Activated CD4-positive, alpha-beta memory T cell treated with anti-CD3 and anti-CD28 coated beads, Interleukin-2, amount 10 ng/mL, durations not matched to agents 7 days and 5 days (primary cell): ENCODE measurements at regions of chr4 and their contacts with region 1.

Region 1: GRCh38 chr4:163554870-163555465 is 60.5 kb downstream of the TMA16 start:
- DNase-seq: no peak
- H3K4me3 Mint-ChIP-seq: no peak overlapping the region
- H3K27ac Mint-ChIP-seq: no peak overlapping the region
- H3K4me1 Mint-ChIP-seq: peaks cover 26% of the 10 kb centered on the region
- H3K27me3 Mint-ChIP-seq: peaks cover 1% of the 10 kb centered on the region

Region 2: GRCh38 chr4:162497564-162498167 is 1057.3 kb before region 1 on chr4:
- CTCF ChIA-PET with region 1: interaction called, 11 read pairs
- POLR2A ChIA-PET with region 1: no interaction called
- DNase-seq: peak; percentile 18
- H3K4me3 Mint-ChIP-seq: no peak overlapping the region
- H3K27ac Mint-ChIP-seq: no peak overlapping the region
- H3K4me1 Mint-ChIP-seq: no peaks in the 10 kb centered on the region
- H3K27me3 Mint-ChIP-seq: no peaks in the 10 kb centered on the region

Region 3: DNA sequence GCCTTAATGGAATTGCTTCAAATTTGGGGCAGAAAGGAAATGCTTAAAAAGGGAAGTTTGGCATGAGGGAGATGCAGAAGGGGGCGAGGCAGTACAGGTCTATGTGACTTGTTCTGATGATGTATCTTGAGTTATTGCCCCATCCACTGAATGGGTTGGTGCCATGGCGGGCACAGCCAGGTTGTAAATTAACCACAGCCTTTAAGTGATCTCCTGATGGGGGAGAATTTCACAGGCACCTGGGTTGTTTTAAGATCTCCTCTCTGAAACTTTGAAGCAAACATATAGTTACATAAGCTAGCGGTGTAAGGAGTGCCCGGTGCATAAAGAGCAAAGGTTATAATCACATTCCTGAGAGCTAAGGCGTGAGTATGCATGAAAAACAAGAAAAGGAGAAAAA is 174.3 kb before region 1 on chr4:
- CTCF ChIA-PET with region 1: no interaction called
- POLR2A ChIA-PET with region 1: no interaction called
- DNase-seq: no peak
- H3K4me3 Mint-ChIP-seq: no peak overlapping the region
- H3K27ac Mint-ChIP-seq: no peak overlapping the region
- H3K4me1 Mint-ChIP-seq: no peaks in the 10 kb centered on the region
- H3K27me3 Mint-ChIP-seq: no peaks in the 10 kb centered on the region

Region 4: DNA sequence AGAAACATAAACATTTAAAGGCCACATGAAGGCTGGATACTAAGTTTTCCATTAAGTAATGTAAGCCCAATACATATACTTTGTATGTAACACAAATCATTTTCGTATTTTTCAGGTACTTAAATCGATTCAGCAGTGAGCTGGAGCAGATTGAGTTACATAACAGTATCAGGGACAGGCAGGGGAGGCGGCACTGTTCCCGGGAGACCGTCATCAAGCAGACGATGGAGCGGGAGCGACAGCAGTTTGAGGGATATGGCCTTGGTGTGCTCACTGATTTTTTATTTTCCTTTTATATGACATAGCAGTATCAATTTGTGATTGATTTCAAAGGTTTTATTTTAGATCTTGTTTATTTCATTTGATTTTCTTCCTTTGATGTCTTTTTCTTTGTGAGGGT is 39.8 kb before region 1 on chr4:
- CTCF ChIA-PET with region 1: no interaction called
- POLR2A ChIA-PET with region 1: no interaction called
- DNase-seq: no peak
- H3K4me3 Mint-ChIP-seq: no peak overlapping the region
- H3K27ac Mint-ChIP-seq: no peak overlapping the region
- H3K4me1 Mint-ChIP-seq: no peaks in the 10 kb centered on the region
- H3K27me3 Mint-ChIP-seq: no peaks in the 10 kb centered on the region

Region 5: GRCh38 chr4:163755013-163755412 is 200.0 kb after region 1 on chr4:
- CTCF ChIA-PET with region 1: interaction called, 17 read pairs
- POLR2A ChIA-PET with region 1: no interaction called
- DNase-seq: no peak
- H3K4me3 Mint-ChIP-seq: no peak overlapping the region
- H3K27ac Mint-ChIP-seq: no peak overlapping the region
- H3K4me1 Mint-ChIP-seq: no peaks in the 10 kb centered on the region
- H3K27me3 Mint-ChIP-seq: no peaks in the 10 kb centered on the region

Region 6: GRCh38 chr4:164731827-164732474 is 1177.0 kb after region 1 on chr4:
- CTCF ChIA-PET with region 1: interaction called, 15 read pairs
- POLR2A ChIA-PET with region 1: no interaction called
- DNase-seq: peak; percentile 46
- H3K4me3 Mint-ChIP-seq: no peak overlapping the region
- H3K27ac Mint-ChIP-seq: no peak overlapping the region
- H3K4me1 Mint-ChIP-seq: peaks cover 2% of the 10 kb centered on the region
- H3K27me3 Mint-ChIP-seq: peaks cover 6% of the 10 kb centered on the region